ENCODE measurements at regions of chr11 and their contacts with region 1.

Region 1: DNA sequence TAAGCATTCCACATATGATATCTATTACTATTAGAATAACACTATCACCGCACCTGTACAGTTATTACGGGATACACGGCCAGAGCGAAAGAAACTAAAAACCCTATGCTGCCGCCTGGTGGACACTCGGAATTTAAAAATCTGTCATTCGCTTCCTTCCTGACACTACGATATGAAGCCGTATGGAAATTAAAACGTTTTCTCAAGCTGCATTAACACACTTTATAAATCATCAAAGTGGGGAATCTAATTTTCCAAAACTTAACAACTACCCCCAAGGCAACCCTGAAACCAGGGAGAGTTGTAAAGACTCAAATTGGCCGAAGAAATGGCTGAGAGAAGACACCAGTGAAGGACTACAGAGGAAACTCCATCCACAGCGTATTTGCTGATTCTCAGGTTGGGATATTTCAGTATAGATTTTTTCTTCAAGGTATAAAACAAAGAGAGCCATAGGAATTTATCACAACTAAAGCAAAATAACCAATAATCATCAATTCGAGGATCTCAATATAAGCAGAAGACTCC is 1.4 kb downstream of the CCDC73 start:
- DNase-seq: peak; percentile 30
- ATAC-seq: peak; percentile 62
- H3K4me3 Mint-ChIP-seq: peak overlapping the region; percentile 15
- H3K27ac Mint-ChIP-seq: no peak overlapping the region
- H3K4me1 Mint-ChIP-seq: peaks cover 6% of the 10 kb centered on the region
- H3K27me3 Mint-ChIP-seq: no peaks in the 10 kb centered on the region
- CTCF ChIP-seq: peak; percentile 62

Region 2: GRCh38 chr11:32323814-32324130 is 469.2 kb before region 1 on chr11:
- CTCF ChIA-PET with region 1: interaction called, 23 read pairs
- POLR2A ChIA-PET with region 1: no interaction called
- intact Hi-C with region 1: no loop called
- DNase-seq: no peak
- ATAC-seq: no peak
- H3K4me3 Mint-ChIP-seq: no peak overlapping the region
- H3K27ac Mint-ChIP-seq: no peak overlapping the region
- H3K4me1 Mint-ChIP-seq: no peaks in the 10 kb centered on the region
- H3K27me3 Mint-ChIP-seq: peaks cover 7% of the 10 kb centered on the region
- CTCF ChIP-seq: no peak

Region 3: GRCh38 chr11:32713496-32713895 is 79.5 kb before region 1 on chr11:
- CTCF ChIA-PET with region 1: no interaction called
- POLR2A ChIA-PET with region 1: no interaction called
- intact Hi-C with region 1: loop called (anchors 1 kb)
- DNase-seq: no peak
- ATAC-seq: no peak
- H3K4me3 Mint-ChIP-seq: no peak overlapping the region
- H3K27ac Mint-ChIP-seq: no peak overlapping the region
- H3K4me1 Mint-ChIP-seq: no peaks in the 10 kb centered on the region
- H3K27me3 Mint-ChIP-seq: peaks cover 13% of the 10 kb centered on the region
- CTCF ChIP-seq: no peak

Region 4: GRCh38 chr11:32751381-32751780 is 41.6 kb before region 1 on chr11:
- CTCF ChIA-PET with region 1: interaction called, 9 read pairs
- POLR2A ChIA-PET with region 1: no interaction called
- intact Hi-C with region 1: loop called (anchors 1 kb)
- DNase-seq: no peak
- ATAC-seq: no peak
- H3K4me3 Mint-ChIP-seq: no peak overlapping the region
- H3K27ac Mint-ChIP-seq: no peak overlapping the region
- H3K4me1 Mint-ChIP-seq: no peaks in the 10 kb centered on the region
- H3K27me3 Mint-ChIP-seq: peaks cover 5% of the 10 kb centered on the region
- CTCF ChIP-seq: no peak